Breast epithelium (tissue), 4 donors: ENCODE measurements at regions of chr22 and their contacts with region 1.

Region 1: GRCh38 chr22:18077639-18078328 is at the start of gene PEX26:
- DNase-seq: peak; percentile 94 to 95
- H3K4me3 ChIP-seq: peak within 1 kb of the TSS; percentile 86 to 97 (median 97)
- H3K27ac ChIP-seq: peak within 1 kb of the TSS; percentile 88 to 92
- H3K4me1 ChIP-seq: peaks cover 0 to 20% of the 10 kb centered on the region in 2 donors
- H3K27me3 ChIP-seq: no peaks in the 10 kb centered on the region
- CTCF ChIP-seq: no peak
- POLR2A ChIP-seq: no peak
- total RNA-seq, gene PEX26: 18.7 to 22.2 (median 19.2) TPM

Region 2: DNA sequence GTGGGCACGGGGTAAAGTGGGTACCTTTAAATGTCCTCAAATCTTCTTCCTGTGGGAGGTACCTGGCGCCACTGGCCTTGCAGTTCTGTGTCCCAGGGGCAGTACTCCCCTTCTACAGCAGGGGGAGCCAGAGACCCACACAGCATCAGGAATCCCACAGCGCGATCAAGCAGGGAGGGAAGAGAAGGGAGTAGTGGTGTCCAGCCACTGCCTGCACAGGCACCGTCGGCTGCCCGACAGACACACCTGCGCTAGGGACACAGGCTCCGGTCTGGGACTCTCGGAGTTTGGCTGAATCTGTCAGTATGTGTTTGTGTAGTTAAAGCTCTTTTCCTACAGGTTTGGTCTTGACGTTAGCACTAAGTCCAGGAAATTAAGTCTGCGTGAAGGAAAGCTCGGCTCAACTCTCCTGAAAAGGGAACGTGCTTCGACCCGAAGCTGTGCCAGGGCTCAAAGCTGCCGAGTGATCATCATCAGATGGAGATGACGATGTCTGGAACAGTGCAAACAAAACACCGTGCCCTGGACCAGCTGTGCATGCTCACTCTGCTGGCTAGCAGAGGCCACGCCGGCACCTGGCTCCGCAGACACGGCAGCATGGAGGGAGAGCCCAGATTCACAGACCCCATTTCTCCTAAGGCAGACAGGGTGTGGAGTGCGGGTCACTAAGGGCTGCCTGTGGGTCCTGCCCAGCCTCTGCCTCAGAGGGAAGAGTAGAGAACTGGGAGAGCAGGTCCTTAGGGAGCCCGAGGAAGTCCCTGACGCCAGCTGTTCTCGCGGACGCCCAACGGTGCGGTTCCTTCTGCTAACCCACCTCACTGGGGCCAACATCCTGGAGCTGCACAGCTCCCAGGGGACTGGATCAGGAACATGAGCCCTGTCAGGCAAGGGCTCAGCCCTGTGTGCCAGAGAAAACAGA is 247.5 kb before region 1 on chr22:
- intact Hi-C with region 1: loop called (anchors 5 kb)
- DNase-seq: peak; percentile 88 to 91
- H3K4me3 ChIP-seq: peak overlapping the region in 1 of 3 donors; percentile 43
- H3K27ac ChIP-seq: peak overlapping the region; percentile 68 to 88
- H3K4me1 ChIP-seq: peaks cover 5 to 7% of the 10 kb centered on the region in 2 donors
- H3K27me3 ChIP-seq: no peaks in the 10 kb centered on the region
- CTCF ChIP-seq: peak; percentile 98 to 99 (median 99)
- POLR2A ChIP-seq: no peak

Region 3: GRCh38 chr22:18057568-18058209 is 20.1 kb before region 1 on chr22:
- intact Hi-C with region 1: no loop called
- DNase-seq: peak in 1 of 2 donors; percentile 90
- H3K4me3 ChIP-seq: no peak overlapping the region
- H3K27ac ChIP-seq: peak overlapping the region; percentile 86 to 89
- H3K4me1 ChIP-seq: peaks cover 0 to 10% of the 10 kb centered on the region in 2 donors
- H3K27me3 ChIP-seq: no peaks in the 10 kb centered on the region
- CTCF ChIP-seq: no peak
- POLR2A ChIP-seq: no peak